ENCODE measurements at regions of chr1 and their contacts with region 1.

Region 1: DNA sequence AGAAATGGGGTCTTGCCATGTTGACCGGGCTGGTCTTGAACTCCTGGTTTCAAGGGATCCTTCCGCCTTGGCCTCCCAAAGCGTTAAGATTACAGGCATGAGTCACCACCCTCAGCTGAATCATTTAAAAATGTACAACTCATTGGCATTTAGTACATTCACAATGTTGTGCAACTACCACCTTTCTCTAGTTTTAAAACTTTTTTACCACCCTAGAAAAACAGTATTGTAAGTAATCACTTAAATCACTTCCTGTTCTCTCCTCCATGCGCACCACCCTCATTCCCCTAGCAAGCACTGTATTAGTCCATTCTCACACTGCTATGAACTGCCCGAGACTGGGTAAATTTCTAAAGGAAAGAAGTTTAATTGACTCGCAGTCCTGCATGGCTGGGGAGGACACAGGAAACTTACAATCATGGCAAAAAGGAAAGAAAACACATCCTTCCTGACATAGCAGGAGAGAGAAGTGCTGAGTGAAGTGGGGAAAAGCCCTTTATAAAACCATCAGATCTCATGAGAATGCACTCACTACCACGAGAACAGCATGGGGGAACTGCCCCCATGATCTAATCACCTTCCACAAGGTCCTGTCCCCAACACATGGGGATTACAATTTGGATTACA is 14.4 kb upstream of the THEM5 start:
- DNase-seq: peak; percentile 81
- H3K4me3 ChIP-seq: no peak overlapping the region
- H3K27ac ChIP-seq: peak overlapping the region; percentile 36
- H3K4me1 ChIP-seq: peaks cover 16% of the 10 kb centered on the region
- H3K27me3 ChIP-seq: no peaks in the 10 kb centered on the region
- CTCF ChIP-seq: no peak
- POLR2A ChIP-seq: no peak

Region 2: DNA sequence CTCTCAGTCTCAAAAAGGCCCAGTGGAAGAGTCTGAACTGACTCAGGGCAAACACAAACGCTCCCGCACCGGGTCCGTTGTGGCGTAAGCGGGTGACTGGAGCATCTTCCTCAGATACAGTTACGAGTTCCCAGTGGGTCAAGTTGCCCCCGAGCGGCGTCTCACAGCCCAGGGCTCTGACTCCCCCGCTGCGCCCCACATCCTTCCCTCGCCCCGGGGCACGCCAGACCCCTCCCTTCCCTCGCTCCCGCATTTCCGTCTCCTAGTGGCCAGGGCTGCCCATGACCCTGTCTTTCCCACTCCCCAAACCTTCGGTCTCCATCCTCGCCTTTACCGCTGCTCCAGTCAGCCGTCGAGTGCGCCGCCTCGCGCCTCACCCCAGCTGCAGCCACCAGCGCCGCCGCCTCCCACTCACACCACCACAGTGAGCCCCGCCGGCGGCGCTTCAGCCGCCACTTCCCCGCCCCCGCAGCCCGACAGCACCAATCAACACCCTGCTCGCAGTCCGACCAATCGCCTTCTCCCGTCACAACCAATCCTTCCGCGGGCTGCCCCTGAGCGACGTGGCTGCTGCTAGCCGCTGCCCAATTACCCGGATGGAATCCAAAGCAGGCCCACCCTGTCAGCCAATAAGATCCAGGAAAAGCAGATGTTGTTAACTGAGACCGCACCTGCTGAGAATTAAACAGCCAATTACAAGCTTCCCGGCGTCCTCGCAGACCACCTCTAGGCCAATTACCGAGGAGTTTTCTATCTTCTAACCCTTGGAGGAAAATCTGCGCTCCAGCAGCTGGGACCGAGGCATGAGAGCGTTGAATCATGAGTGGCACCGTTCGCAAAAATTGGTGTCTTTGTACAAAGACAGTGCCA is 77.6 kb before region 1 on chr1 and contains the start of gene TDRKH:
- CTCF ChIA-PET with region 1: no interaction called
- POLR2A ChIA-PET with region 1: no interaction called
- dilution Hi-C with region 1: no loop called
- intact Hi-C with region 1: no loop called
- DNase-seq: peak; percentile 100
- H3K4me3 ChIP-seq: peak within 1 kb of the TSS; percentile 43 to 94 (median 88)
- H3K27ac ChIP-seq: no peak within 1 kb of the TSS
- H3K4me1 ChIP-seq: peaks cover 12% of the 10 kb centered on the region
- H3K27me3 ChIP-seq: peaks cover 0 to 1% of the 10 kb centered on the region in 2 experiments
- CTCF ChIP-seq: peak in 1 of 2 donors; percentile 39
- POLR2A ChIP-seq: peak; percentile 17
- total RNA-seq, gene TDRKH: 9.3 and 9.6 TPM in 2 replicates

Region 3: DNA sequence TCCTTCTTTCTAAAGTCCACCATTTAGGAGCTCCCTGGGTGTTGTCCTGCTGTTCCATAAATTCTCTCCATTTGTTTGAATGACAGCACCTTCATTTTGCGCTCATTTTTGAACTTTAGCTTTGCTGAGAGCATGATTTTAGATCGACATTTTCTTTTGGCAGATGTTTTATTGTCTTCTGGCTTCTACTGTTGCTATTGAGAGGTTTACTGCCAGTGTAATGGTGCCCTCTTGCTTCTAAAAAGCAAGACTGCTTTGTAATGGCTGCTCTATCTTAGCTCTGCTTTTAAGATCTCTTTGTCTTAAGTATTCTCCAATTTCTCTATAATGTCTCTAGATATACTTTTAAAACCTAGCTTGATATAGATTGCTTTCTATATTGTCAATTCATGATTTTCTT is 13.6 kb after region 1 on chr1:
- CTCF ChIA-PET with region 1: interaction called, 18 read pairs
- POLR2A ChIA-PET with region 1: interaction called, 4 read pairs
- dilution Hi-C with region 1: no loop called
- intact Hi-C with region 1: no loop called
- DNase-seq: peak; percentile 35
- H3K4me3 ChIP-seq: no peak overlapping the region
- H3K27ac ChIP-seq: no peak overlapping the region
- H3K4me1 ChIP-seq: peaks cover 1% of the 10 kb centered on the region
- H3K27me3 ChIP-seq: no peaks in the 10 kb centered on the region
- CTCF ChIP-seq: no peak
- POLR2A ChIP-seq: no peak

Region 4: DNA sequence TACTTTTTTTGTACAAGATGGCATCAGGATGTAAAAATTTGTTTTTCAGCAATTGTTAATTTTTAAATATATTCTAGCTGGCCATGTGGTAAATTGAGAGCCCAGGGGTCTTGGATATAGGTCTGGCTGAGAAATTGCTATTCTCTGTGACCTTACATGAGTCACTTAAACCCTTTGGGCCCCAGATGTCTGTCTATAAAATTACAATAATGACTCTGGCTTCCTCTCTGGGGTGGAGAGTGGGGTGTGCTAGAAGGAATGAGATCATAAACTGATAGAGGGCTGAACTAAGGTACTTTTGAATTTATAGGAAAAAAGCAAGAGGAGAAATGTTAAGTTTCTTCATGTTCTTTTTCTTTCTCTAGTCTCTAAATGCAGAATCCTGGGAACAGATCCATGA is 259.8 kb after region 1 on chr1:
- CTCF ChIA-PET with region 1: no interaction called
- POLR2A ChIA-PET with region 1: no interaction called
- dilution Hi-C with region 1: no loop called
- intact Hi-C with region 1: no loop called
- DNase-seq: no peak
- H3K4me3 ChIP-seq: no peak overlapping the region
- H3K27ac ChIP-seq: no peak overlapping the region
- H3K4me1 ChIP-seq: no peaks in the 10 kb centered on the region
- H3K27me3 ChIP-seq: peaks cover 2 to 4% of the 10 kb centered on the region in 2 experiments
- CTCF ChIP-seq: no peak
- POLR2A ChIP-seq: no peak

Measured in endothelial cell of umbilical vein (primary cell).